ENCODE measurements at regions of chrX and their contacts with region 1.

Region 1: GRCh38 chrX:44872817-44873414 is at the start of gene KDM6A:
- DNase-seq: peak; percentile 96
- H3K4me3 Mint-ChIP-seq: peak within 1 kb of the TSS; percentile 93
- H3K27ac Mint-ChIP-seq: peak within 1 kb of the TSS; percentile 98
- H3K4me1 Mint-ChIP-seq: peaks cover 7% of the 10 kb centered on the region
- H3K27me3 Mint-ChIP-seq: no peaks in the 10 kb centered on the region
- total RNA-seq, gene KDM6A: 21.5 to 22.5 TPM

Region 2: DNA sequence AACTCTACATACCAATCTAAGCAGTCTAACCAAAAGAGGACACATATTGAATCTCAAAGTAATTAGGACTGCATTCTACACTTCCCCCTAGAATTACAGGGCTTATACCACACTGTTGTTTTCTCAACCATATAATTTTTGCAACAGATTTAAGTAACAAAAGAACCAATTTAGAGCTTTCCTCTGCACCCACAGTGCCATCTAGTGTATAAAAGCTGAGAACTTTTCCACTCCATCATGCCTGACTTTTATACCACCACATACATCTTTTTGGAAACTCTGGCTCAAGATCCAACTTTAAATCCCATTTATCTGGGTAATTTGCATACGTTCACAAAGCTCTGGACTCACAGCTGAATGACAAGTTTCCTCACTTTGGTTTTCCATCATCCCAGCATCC is 628.9 kb before region 1 on chrX:
- CTCF ChIA-PET with region 1: no interaction called
- intact Hi-C with region 1: loop called (anchors 10 kb)
- DNase-seq: no peak
- H3K4me3 Mint-ChIP-seq: no peak overlapping the region
- H3K27ac Mint-ChIP-seq: no peak overlapping the region
- H3K4me1 Mint-ChIP-seq: peaks cover 17% of the 10 kb centered on the region
- H3K27me3 Mint-ChIP-seq: no peaks in the 10 kb centered on the region

Region 3: DNA sequence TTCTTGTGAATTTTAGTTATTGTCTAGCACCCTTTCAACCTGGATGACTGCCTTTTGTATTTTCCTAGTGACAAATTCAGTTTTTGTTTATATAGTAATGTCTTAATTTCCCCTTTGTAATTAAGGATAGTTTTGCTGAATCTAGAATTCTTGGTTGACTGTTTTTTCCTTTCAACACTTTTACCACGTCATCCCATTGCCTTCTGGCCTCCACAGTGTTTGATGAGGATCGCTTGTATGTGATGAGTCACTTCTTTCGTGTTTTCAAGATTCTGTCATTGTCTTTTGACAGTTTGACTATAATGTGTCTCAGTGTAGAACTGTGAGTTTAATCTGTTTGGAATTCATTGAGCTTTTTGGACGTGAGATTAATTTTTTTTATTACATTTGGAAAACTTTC is 30.2 kb after region 1 on chrX:
- CTCF ChIA-PET with region 1: no interaction called
- intact Hi-C with region 1: loop called (anchors 1 kb)
- DNase-seq: peak; percentile 35
- H3K4me3 Mint-ChIP-seq: no peak overlapping the region
- H3K27ac Mint-ChIP-seq: no peak overlapping the region
- H3K4me1 Mint-ChIP-seq: peaks cover 64% of the 10 kb centered on the region
- H3K27me3 Mint-ChIP-seq: no peaks in the 10 kb centered on the region

Region 4: GRCh38 chrX:44945736-44946135 is 72.8 kb after region 1 on chrX:
- CTCF ChIA-PET with region 1: no interaction called
- intact Hi-C with region 1: loop called (anchors 1 kb)
- DNase-seq: peak; percentile 22
- H3K4me3 Mint-ChIP-seq: no peak overlapping the region
- H3K27ac Mint-ChIP-seq: no peak overlapping the region
- H3K4me1 Mint-ChIP-seq: peaks cover 23% of the 10 kb centered on the region
- H3K27me3 Mint-ChIP-seq: no peaks in the 10 kb centered on the region

Region 5: DNA sequence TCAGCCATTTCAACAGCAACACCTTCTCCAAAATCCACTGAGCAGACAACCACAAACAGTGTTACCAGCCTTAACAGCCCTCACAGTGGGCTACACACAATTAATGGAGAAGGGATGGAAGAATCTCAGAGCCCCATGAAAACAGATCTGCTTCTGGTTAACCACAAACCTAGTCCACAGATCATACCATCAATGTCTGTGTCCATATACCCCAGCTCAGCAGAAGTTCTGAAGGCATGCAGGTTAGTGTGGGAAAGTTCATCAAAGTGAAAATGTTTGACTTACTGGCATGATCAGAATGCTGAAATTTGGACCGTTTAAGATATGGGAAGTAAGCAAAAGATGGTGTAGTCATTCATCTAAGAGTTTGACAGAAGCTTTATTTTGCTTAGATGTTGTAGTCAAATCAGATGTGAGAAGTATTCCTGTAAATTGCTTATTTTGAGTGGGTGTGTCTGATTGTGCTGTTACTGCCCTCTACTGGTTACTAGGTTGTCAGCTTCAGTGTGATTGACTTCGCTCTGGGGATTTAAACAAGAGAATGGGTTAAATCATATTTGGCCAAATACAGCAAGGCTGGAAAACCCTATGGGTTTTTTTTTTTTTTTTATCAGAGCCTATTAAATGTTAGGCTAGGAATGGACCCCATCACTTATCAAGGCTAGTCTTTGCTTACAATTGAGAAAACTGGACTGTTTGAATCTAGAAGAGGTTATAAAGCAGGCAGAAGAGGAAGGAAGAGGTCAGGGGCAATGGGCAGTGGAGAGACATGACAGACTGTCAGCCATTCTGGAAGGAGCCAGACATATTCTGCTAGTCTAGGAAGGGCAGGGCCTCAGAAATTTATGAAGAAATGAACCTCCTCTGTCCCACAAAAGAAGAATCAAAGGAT is 197.4 kb after region 1 on chrX:
- CTCF ChIA-PET with region 1: no interaction called
- intact Hi-C with region 1: loop called (anchors 1 kb)
- DNase-seq: peak; percentile 16
- H3K4me3 Mint-ChIP-seq: peak overlapping the region; percentile 39
- H3K27ac Mint-ChIP-seq: peak overlapping the region; percentile 80
- H3K4me1 Mint-ChIP-seq: peaks cover 54% of the 10 kb centered on the region
- H3K27me3 Mint-ChIP-seq: no peaks in the 10 kb centered on the region

Measured in activated naive CD4-positive, alpha-beta T cell treated with anti-CD3 and anti-CD28 coated beads for 36 hours (primary cell).